Activated T-helper 2 cell treated with anti-CD3 and anti-CD28 coated beads, Interferon-gamma antibody, Interleukin-2, Interleukin-4, amounts not matched to agents 10 μg/mL and 5 μg/mL and 100 μg/mL, durations not matched to agents 14 hours and 24 hours and 36 hours (primary cell): ENCODE measurements at regions of chr20 and their contacts with region 1.

Region 1: DNA sequence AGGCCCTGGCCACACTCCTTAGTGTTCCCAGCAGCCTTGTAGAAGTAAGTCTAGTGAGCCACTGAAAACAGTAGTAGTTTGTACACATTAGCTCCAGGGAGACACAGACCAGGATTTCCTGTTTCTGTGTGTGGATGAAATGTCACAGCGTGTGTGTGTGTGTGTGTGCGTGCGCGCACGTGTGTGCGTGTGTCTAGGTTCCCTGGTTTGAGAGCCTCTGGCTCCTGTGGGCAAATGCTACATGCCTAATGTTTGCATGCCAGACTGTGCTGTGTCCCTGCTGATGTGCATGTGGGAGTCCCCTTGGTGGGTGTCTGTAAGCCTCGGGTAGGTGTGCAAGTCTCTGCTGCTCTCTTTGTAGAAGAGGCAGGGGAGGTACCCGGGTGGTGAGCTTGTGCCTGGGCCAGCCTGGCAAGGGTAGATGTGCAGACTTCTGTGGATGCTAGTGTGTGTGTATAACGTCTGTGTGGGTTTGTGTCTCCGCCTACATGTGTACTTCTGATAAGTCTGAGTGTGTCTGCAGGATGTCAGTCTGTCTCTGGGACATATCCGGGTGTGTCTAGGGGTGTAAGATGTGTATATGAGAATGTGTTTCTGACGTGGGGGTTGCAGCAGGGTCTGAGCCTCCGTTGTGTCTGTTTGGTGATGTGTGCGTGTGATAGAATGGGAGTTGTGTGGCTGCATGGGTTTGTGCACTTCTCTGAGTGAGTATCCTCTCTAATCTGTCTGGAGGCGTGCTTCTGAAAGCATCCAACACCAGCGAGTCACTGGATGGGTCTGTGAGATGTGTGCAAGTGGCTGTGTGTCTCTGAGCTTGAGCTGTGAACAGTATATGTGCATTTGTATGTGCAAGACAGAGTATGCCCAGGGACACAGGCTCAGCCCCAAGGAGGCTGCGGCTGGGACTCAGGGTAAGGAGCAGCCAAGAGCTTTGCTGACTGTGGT is 19.0 kb upstream of the TLDC2 start:
- DNase-seq: peak; percentile 55
- H3K4me3 Mint-ChIP-seq: no peak overlapping the region
- H3K27ac Mint-ChIP-seq: peak overlapping the region; percentile 29
- H3K4me1 Mint-ChIP-seq: peaks cover 17% of the 10 kb centered on the region
- H3K27me3 Mint-ChIP-seq: peaks cover 15% of the 10 kb centered on the region

Region 2: GRCh38 chr20:36835453-36836198 is 21.3 kb before region 1 on chr20:
- intact Hi-C with region 1: loop called (anchors 2 kb)
- DNase-seq: peak; percentile 86
- H3K4me3 Mint-ChIP-seq: peak overlapping the region; percentile 78
- H3K27ac Mint-ChIP-seq: peak overlapping the region; percentile 93
- H3K4me1 Mint-ChIP-seq: peaks cover 15% of the 10 kb centered on the region
- H3K27me3 Mint-ChIP-seq: no peaks in the 10 kb centered on the region

Region 3: GRCh38 chr20:37192137-37192854 is 335.3 kb after region 1 on chr20:
- intact Hi-C with region 1: no loop called
- DNase-seq: peak; percentile 61
- H3K4me3 Mint-ChIP-seq: no peak overlapping the region
- H3K27ac Mint-ChIP-seq: peak overlapping the region; percentile 57
- H3K4me1 Mint-ChIP-seq: peaks cover 59% of the 10 kb centered on the region
- H3K27me3 Mint-ChIP-seq: no peaks in the 10 kb centered on the region